ENCODE measurements at regions of chr16 and their contacts with region 1.

Region 1: GRCh38 chr16:82055728-82056549 is 20.9 kb downstream of the HSD17B2 start:
- DNase-seq: no peak
- H3K4me3 Mint-ChIP-seq: peak overlapping the region; percentile 41
- H3K27ac Mint-ChIP-seq: peak overlapping the region; percentile 62
- H3K4me1 Mint-ChIP-seq: peaks cover 42% of the 10 kb centered on the region
- H3K27me3 Mint-ChIP-seq: no peaks in the 10 kb centered on the region
- CTCF ChIP-seq: no peak

Region 2: DNA sequence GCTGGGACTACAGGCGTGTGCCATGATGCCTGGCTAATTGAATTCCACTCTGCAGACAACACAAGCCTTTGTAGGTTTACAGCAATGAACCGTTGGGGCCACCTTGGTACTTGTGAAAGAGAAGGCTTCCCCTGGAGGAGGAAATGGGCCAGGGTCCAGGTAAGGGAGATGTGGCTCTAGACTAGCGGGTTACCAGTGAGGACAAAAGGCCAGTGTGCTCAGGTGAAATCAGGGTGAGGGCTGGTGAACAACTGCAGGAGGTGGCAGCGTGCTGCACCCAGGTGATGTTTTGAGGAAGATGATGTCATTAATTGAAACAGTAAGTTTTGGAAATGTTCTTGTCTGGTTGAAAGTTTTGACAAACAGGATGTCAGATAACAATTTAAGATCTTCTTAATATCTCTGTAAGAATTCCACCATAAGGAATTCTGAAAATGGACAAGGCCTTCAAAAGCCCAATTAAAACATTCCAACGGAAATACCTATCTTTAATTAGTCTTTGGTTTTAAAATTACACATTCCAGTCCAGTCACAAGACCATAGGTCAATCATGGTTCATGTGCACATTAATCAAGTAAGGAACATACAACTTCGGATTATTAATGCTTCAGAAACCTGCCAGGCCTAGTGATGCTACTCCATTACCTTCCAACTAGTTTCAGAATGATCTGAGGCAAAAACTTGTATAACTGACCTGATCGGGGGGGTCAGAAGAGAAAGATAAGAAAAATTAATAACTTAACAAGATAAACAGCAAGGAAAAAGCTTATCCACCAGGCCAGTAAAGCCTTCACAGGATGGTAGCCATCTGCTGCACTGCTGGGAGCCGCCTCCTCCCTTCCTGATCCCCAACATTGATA is 51.1 kb before region 1 on chr16:
- CTCF ChIA-PET with region 1: no interaction called
- intact Hi-C with region 1: loop called (anchors 2 kb)
- DNase-seq: peak; percentile 89
- H3K4me3 Mint-ChIP-seq: peak overlapping the region; percentile 24
- H3K27ac Mint-ChIP-seq: peak overlapping the region; percentile 88
- H3K4me1 Mint-ChIP-seq: peaks cover 67% of the 10 kb centered on the region
- H3K27me3 Mint-ChIP-seq: no peaks in the 10 kb centered on the region
- CTCF ChIP-seq: no peak

Measured in Calu3 (cell line).